HCT116 (cell line): ENCODE measurements at regions of chr17 and their contacts with region 1.

Region 1: DNA sequence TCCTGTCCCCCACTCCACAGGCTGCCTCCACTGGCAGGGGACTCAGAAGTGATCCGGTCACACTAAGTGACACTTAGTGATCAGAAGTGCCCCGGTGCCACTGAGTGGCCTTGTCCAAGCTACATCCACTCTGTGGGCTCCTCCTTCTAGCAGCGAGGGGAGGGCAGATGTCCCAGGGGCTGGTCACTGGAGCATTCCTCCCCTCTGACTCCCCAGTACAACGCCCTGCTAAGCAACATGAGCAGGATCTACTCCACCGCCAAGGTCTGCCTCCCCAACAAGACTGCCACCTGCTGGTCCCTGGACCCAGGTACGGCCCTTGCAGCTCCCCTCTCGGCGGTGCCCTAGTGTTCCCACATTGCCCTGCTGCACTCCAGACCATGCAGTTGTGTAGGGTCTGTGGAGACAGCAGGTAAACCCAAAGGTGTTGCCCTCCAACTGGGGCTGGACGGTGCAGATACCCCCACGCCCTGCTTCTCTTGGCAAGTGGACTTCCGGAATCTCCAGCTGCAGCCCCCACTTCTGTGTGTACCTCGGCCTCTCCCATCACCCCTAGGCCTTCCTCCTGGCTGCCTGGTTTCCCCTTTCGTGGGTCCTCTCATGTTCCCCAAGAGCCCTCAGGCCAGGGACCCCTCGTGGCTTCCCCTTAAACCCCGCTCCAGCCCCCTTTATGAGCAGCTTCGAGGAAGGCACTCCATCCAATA is 2.1 kb downstream of the ACE start:
- DNase-seq: peak; percentile 93
- ATAC-seq: peak; percentile 89
- H3K4me3 ChIP-seq: peak overlapping the region in 1 of 2 experiments; percentile 5; a peak in 2 of 4 replicates
- H3K27ac ChIP-seq: peak overlapping the region; percentile 5; the same call in 1 of the 2 replicates
- H3K4me1 ChIP-seq: peaks cover 13 to 41% of the 10 kb centered on the region in 2 experiments
- H3K27me3 ChIP-seq: no peaks in the 10 kb centered on the region
- CTCF ChIP-seq: peak; percentile 97 to 99 (median 99)
- POLR2A ChIP-seq: no peak
- RAD21 ChIP-seq: peak; percentile 97

Region 2: DNA sequence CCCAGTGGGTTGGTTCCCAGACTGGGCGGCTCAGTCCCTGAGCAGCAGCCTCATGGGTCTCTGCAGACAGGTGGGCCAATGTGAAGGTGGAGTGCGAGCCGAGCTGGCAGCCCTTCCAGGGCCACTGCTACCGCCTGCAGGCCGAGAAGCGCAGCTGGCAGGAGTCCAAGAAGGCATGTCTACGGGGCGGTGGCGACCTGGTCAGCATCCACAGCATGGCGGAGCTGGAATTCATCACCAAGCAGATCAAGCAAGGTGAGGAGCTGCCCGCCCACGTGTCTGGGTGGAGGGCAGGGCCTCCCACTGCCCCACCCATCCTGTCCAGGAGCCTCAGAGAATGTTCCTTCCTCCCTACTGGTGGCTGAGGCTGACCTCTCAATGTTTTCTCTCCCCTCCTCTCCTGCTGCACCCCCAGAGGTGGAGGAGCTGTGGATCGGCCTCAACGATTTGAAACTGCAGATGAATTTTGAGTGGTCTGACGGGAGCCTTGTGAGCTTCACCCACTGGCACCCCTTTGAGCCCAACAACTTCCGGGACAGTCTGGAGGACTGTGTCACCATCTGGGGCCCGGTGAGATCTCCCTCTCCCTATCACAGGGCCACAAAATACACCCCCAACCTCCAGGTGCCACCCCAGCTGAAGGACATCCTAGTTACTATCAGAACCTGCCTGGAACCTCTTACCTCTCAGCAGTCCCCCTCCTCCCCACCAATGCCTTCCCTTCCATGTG is 807.2 kb before region 1 on chr17:
- CTCF ChIA-PET with region 1: interaction called, 11 read pairs
- POLR2A ChIA-PET with region 1: no interaction called
- RAD21 ChIA-PET with region 1: no interaction called
- intact Hi-C with region 1: no loop called
- DNase-seq: no peak
- ATAC-seq: peak; percentile 39
- H3K4me3 ChIP-seq: no peak overlapping the region
- H3K27ac ChIP-seq: no peak overlapping the region; the same call in 1 of the 2 replicates
- H3K4me1 ChIP-seq: peaks cover 9 to 14% of the 10 kb centered on the region in 2 experiments; a peak in 3 of 4 replicates
- H3K27me3 ChIP-seq: no peaks in the 10 kb centered on the region
- CTCF ChIP-seq: no peak
- POLR2A ChIP-seq: no peak
- RAD21 ChIP-seq: no peak

Region 3: GRCh38 chr17:63434876-63435684 is 43.9 kb before region 1 on chr17:
- CTCF ChIA-PET with region 1: interaction called, 62 read pairs
- POLR2A ChIA-PET with region 1: interaction called, 6 read pairs
- RAD21 ChIA-PET with region 1: interaction called, 9 to 16 read pairs
- intact Hi-C with region 1: no loop called
- DNase-seq: peak; percentile 37
- ATAC-seq: peak; percentile 65
- H3K4me3 ChIP-seq: no peak overlapping the region; a peak in 1 of 4 replicates
- H3K27ac ChIP-seq: peak overlapping the region; percentile 70
- H3K4me1 ChIP-seq: peaks cover 45% of the 10 kb centered on the region in 2 experiments
- H3K27me3 ChIP-seq: no peaks in the 10 kb centered on the region
- CTCF ChIP-seq: peak in 2 of 3 experiments; percentile 48 to 72; a peak in 4 of 6 replicates
- POLR2A ChIP-seq: no peak
- RAD21 ChIP-seq: peak; percentile 14; the same call in 1 of the 2 replicates

Region 4: DNA sequence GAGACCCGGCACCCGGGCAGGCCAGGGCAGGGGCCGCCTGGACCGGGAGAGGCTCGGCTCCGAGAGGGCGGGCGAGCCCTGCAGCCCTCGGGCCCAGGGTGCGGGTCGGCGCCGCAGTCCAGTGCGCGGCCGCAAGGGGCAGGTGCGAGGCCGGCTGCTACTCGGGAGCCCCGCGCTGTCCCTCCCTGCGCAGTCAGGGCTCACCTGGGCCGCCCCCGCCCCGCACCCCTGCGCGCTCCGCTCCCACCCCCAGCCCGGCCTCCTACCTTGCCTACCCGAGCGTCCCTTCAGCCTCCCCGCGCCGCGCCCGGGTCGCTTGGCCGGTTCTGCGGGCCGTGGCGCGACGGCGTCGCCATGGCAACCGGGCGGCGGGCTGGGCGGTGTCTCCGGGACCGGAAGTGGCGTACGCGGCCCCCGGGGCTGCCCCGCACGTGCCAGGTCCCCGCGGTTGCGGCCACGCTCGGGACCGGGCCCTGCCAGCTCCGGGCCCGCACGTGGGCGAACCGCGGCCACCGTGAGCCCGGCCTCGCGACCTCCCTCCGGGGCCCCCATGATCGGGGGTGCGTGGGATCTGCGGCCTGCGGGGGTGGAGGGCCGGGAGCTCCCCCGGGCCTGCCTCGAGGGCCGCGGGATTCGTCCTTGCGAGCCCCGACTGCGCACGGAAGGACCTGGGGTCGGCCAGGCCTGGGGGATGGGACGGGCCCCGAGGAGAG is 32.8 kb before region 1 on chr17 and contains the start of gene CYB561:
- CTCF ChIA-PET with region 1: interaction called, 11 read pairs
- POLR2A ChIA-PET with region 1: interaction called, 8 read pairs
- RAD21 ChIA-PET with region 1: interaction called, 3 to 12 read pairs
- intact Hi-C with region 1: loop called (anchors 2 kb)
- DNase-seq: peak; percentile 47
- ATAC-seq: peak; percentile 90
- H3K4me3 ChIP-seq: peak within 1 kb of the TSS; percentile 85 to 86
- H3K27ac ChIP-seq: peak within 1 kb of the TSS; percentile 92
- H3K4me1 ChIP-seq: peaks cover 15 to 35% of the 10 kb centered on the region in 2 experiments
- H3K27me3 ChIP-seq: no peaks in the 10 kb centered on the region
- CTCF ChIP-seq: peak in 2 of 3 experiments; percentile 54 to 74; a peak in 4 of 6 replicates
- POLR2A ChIP-seq: peak; percentile 71
- RAD21 ChIP-seq: no peak
- total RNA-seq, gene CYB561: 67.6 TPM

Region 5: DNA sequence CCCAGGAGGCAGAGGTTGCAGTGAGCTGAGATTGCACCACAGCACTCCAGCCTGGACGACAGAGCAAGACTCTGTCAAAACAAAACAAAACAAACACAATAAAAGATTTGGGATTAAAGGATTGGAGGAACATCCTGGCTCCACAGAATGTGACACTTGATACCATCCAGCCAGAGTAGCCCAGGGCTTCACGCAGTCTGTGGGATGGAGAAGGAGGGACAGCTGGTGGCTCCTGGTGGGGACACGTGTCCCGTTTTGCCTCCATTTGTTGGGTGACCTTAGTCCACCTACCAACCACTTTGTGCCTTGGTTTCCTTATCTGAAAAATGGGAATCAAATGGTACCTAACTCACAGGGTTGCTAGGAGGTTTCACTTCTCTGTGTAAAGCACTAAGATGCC is 20.5 kb before region 1 on chr17:
- CTCF ChIA-PET with region 1: interaction called, 17 read pairs
- POLR2A ChIA-PET with region 1: no interaction called
- RAD21 ChIA-PET with region 1: no interaction called
- intact Hi-C with region 1: no loop called
- DNase-seq: no peak
- ATAC-seq: no peak
- H3K4me3 ChIP-seq: no peak overlapping the region
- H3K27ac ChIP-seq: no peak overlapping the region
- H3K4me1 ChIP-seq: peaks cover 9 to 49% of the 10 kb centered on the region in 2 experiments
- H3K27me3 ChIP-seq: no peaks in the 10 kb centered on the region
- CTCF ChIP-seq: no peak
- POLR2A ChIP-seq: no peak
- RAD21 ChIP-seq: no peak

Region 6: GRCh38 chr17:63611354-63611753 is 132.4 kb after region 1 on chr17:
- CTCF ChIA-PET with region 1: interaction called, 14 read pairs
- POLR2A ChIA-PET with region 1: no interaction called
- RAD21 ChIA-PET with region 1: interaction called, 3 to 5 read pairs
- intact Hi-C with region 1: no loop called
- DNase-seq: no peak
- ATAC-seq: no peak
- H3K4me3 ChIP-seq: no peak overlapping the region
- H3K27ac ChIP-seq: no peak overlapping the region
- H3K4me1 ChIP-seq: no peaks in the 10 kb centered on the region
- H3K27me3 ChIP-seq: no peaks in the 10 kb centered on the region
- CTCF ChIP-seq: no peak
- POLR2A ChIP-seq: no peak
- RAD21 ChIP-seq: no peak